ENCODE measurements at regions of chr22 and their contacts with region 1.

Region 1: DNA sequence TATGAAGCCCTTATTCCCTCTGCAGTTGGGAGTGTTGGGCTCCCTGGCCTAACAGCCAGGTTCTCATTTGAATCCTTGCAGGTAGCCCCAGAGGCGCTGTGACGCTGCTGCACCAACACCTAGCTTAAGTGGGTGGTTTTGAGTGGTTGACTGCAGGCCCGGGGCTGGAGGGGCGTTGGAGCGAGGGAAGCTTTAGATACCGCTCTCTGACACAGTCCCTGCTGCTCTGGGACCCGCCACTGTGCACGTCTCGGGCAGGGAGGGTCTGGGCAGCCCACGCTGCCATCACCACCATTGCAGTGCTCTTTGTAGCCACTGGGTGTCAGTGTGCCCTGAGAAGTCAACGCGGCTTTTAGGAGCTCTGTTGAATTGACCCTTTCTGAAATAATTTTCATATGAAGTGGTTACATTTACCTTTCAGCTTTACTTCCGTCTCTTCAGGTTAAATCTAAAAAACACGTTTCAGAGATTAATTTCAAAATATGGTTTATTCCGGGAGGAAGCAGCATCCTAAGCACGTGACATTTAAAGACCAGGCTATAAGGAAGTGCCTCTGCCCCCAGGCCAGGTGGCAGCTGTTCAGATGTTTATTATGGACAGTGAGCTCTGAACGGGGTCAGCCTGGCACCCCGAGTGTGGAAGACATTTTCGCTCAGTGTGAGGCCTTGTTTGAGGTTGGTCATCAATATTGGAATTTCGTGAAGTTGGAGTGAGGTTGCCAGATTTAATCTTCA is 30.9 kb upstream of the PARVB start:
- DNase-seq: peak; percentile 47 to 64
- H3K4me3 ChIP-seq: no peak overlapping the region
- H3K27ac ChIP-seq: no peak overlapping the region
- H3K4me1 ChIP-seq: no peaks in the 10 kb centered on the region
- H3K27me3 ChIP-seq: no peaks in the 10 kb centered on the region
- CTCF ChIP-seq: peak; percentile 88 to 97 (median 90)
- POLR2A ChIP-seq: no peak

Region 2: DNA sequence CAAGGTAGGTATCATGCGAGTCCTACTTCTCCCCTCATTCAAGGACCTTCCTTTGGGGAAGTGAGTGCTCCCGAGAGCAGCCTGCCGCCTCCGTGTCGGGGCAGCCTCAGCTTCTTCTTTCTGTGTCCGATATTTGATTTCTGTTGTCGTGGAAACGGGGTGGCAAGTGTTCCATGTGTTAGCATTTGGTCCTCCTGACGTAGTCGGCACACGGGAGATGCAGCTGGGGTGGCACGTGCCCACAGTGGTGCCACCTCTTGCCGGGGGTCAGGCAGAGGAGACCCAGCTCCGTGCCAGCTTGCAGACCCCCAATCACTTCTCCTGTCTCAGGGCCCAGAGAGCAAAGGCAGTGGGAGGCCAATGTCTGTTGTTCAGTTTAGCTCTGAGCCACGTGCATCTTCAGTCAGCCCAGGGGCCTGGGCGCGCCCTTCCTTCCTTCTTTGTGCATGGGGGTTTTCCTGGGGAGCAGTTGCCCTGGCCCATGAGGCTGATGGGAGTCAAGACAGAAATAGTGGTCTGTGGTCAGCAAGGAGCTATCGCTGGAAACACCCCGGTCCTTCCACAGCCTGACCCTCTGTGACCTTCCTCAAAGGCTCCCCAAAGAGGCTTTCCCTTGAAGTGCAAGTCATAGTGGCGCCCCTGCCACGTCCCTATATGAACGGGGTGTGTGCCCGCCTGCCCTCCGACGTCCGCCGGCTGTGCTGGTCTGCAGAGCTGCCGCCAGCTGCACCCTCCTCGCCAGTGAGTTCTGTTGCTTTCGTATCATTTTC is 75.4 kb after region 1 on chr22:
- intact Hi-C with region 1: loop called (anchors 10 kb)
- DNase-seq: no peak
- H3K4me3 ChIP-seq: no peak overlapping the region
- H3K27ac ChIP-seq: no peak overlapping the region
- H3K4me1 ChIP-seq: peaks cover 0 to 5% of the 10 kb centered on the region in 2 donors
- H3K27me3 ChIP-seq: no peaks in the 10 kb centered on the region
- CTCF ChIP-seq: no peak
- POLR2A ChIP-seq: no peak

Region 3: GRCh38 chr22:44625981-44626687 is 632.9 kb after region 1 on chr22:
- intact Hi-C with region 1: loop called (anchors 5 kb)
- DNase-seq: peak; percentile 69 to 74
- H3K4me3 ChIP-seq: no peak overlapping the region
- H3K27ac ChIP-seq: no peak overlapping the region
- H3K4me1 ChIP-seq: no peaks in the 10 kb centered on the region
- H3K27me3 ChIP-seq: no peaks in the 10 kb centered on the region
- CTCF ChIP-seq: peak; percentile 97 to 99 (median 98)
- POLR2A ChIP-seq: peak in 1 of 2 donors; percentile 31